WTC11 (cell line): ENCODE measurements at regions of chr16 and their contacts with region 1.

Region 1: DNA sequence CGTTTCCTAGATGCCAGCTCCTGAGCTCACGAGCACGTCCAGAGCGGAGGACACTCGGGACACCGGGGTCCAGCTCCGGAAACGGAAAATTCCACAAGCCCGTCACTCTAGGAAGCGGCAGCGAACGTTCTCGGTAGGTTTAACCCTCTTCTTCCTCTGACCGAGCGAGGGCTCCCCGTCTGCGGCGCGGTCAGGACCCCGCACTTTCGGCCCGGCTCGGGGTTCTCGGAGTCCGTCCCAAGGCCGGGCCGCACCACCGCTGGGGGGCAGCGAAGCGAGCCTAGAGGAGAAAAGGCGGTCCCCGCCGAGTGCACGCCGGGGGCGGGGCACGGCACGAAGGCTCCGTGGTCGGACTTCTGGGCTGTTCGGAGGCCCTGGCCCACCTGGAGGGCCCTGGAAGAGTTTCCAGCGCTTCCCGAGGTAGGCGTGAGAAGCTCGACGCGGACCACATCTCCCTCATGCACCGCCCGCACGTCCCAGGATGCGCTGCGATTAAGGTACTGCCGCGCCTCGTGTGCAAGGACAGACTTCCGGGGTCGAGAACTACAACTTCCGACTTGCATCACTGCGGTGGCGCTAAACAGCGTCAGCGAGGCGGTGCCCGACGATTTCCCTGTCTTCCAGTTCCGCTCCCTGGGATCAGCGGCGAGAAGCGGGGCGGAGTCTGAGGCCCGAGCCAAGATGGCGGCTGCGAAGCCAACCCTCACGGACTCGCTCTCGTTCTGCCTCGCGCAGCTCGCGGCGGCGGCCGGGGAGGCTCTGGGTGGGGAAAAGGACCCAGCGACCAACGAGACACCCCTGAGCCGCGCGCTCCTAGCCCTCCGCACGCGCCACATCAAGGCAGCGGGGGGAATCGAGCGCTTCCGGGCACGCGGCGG is at the start of gene ARMC5:
- DNase-seq: peak; percentile 97
- ATAC-seq: peak; percentile 77
- H3K4me3 Mint-ChIP-seq: peak within 1 kb of the TSS; percentile 88
- H3K27ac Mint-ChIP-seq: peak within 1 kb of the TSS; percentile 93
- H3K4me1 Mint-ChIP-seq: peaks cover 29% of the 10 kb centered on the region
- H3K27me3 Mint-ChIP-seq: no peaks in the 10 kb centered on the region
- CTCF ChIP-seq: no peak
- total RNA-seq, gene ARMC5: 11.3 to 13.2 TPM (median 13.0 TPM) in 3 replicates

Region 2: DNA sequence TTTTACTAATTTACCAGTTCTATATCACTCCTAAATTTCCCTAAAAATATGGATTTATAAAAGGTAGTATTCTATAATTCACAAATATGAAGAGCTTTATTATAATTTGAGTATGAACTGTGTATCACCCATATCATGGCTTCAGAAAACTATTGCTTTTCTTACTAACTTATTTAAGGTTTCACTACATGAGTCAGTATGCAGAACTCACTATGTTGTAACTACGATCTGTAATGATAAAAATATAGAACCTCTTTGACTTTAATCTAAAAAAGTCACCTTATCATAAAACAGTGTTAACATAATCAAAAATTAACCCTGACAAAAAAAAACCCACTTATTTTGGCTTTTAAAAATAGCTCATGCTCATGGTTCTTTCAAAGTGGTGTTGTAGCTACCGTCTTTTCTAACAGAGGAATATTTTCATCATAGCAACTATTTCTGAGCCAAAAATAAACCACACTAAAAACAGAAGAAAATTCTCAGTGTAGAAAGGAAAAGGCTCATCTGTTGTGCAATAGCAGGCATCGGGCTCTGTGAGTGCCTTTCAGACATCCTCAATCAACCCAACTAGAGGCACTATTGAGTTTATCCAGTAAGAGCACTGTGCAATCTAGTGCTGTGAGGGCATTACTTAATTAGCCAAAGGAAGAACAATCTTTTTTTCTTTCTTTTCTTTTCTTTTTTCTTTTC is 157.2 kb before region 1 on chr16:
- CTCF ChIA-PET with region 1: no interaction called
- POLR2A ChIA-PET with region 1: no interaction called
- DNase-seq: no peak
- ATAC-seq: peak; percentile 24; the same call in 1 of the 2 replicates
- H3K4me3 Mint-ChIP-seq: no peak overlapping the region
- H3K27ac Mint-ChIP-seq: no peak overlapping the region
- H3K4me1 Mint-ChIP-seq: no peaks in the 10 kb centered on the region
- H3K27me3 Mint-ChIP-seq: peaks cover 7% of the 10 kb centered on the region; the same call in 1 of the 2 replicates
- CTCF ChIP-seq: no peak

Region 3: DNA sequence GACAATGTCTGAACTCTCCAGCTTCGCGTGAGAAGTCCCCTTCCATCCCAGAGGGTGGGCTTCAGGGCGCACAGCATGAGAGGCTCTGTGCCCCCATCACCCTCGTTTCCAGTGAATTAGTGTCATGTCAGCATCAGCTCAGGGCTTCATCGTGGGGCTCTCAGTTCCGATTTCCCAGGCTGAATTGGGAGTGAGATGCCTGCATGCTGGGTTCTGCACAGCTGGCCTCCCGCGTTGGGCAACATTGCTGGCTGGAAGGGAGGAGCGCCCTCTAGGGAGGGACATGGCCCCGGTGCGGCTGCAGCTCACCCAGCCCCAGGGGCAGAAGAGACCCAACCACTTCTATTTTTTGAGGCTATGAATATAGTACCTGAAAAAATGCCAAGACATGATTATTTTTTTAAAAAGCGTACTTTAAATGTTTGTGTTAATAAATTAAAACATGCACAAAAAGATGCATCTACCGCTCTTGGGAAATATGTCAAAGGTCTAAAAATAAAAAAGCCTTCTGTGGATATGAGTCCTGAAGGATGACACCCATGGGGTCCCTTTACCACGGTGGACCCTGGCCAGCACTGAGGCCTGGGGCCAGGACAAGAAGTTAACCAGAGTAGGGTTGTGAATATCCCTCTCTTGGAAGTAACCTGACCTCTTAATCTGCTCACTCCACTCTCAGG is 76.5 kb before region 1 on chr16:
- CTCF ChIA-PET with region 1: interaction called, 13 read pairs
- POLR2A ChIA-PET with region 1: no interaction called
- DNase-seq: peak; percentile 83
- ATAC-seq: peak; percentile 94
- H3K4me3 Mint-ChIP-seq: peak overlapping the region; percentile 31
- H3K27ac Mint-ChIP-seq: peak overlapping the region; percentile 44
- H3K4me1 Mint-ChIP-seq: peaks cover 8% of the 10 kb centered on the region
- H3K27me3 Mint-ChIP-seq: peaks cover 4% of the 10 kb centered on the region; the same call in 1 of the 2 replicates
- CTCF ChIP-seq: peak; percentile 62

Region 4: GRCh38 chr16:31472709-31473203 is 13.7 kb after region 1 on chr16:
- CTCF ChIA-PET with region 1: interaction called, 221 read pairs
- POLR2A ChIA-PET with region 1: interaction called, 10 read pairs
- DNase-seq: peak; percentile 93
- ATAC-seq: peak; percentile 58
- H3K4me3 Mint-ChIP-seq: peak overlapping the region; percentile 82
- H3K27ac Mint-ChIP-seq: no peak overlapping the region
- H3K4me1 Mint-ChIP-seq: peaks cover 11% of the 10 kb centered on the region
- H3K27me3 Mint-ChIP-seq: peaks cover 65% of the 10 kb centered on the region
- CTCF ChIP-seq: peak; percentile 90

Region 5: DNA sequence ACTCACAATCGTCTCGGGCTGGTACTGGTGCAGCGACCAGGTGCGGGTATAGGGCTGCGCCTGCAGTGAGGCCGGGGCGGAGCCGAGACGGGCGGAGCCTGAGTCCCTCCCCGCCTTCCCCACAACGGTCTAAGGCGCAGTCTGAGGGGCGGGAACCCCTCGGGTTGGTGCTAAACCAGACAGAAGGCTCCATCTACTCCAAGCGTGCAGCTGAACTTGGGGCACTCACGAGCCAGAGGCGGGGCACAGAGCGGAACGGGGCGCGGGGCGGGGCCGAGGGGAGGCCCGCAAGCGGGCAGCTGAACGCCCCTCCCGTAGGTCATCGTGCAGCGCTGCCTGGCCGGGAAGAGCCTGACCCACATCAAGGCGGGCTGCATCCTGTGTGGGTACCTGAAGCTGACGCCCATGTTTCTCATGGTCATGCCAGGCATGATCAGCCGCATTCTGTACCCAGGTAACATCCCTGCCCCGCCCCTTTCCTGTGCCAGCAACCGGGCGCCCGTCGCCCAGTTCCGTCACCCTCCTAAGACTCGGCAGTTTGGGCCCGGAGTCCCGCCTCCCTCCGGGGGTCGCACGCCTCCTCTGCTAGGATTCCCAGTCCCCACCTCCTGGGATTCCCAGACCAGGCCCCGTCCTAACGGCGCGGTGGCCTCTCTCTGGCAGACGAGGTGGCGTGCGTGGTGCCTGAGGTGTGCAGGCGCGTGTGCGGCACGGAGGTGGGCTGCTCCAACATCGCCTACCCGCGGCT is 28.8 kb after region 1 on chr16:
- CTCF ChIA-PET with region 1: interaction called, 221 read pairs
- POLR2A ChIA-PET with region 1: no interaction called
- DNase-seq: peak; percentile 78
- ATAC-seq: peak; percentile 89
- H3K4me3 Mint-ChIP-seq: peak overlapping the region; percentile 78
- H3K27ac Mint-ChIP-seq: no peak overlapping the region
- H3K4me1 Mint-ChIP-seq: peaks cover 8% of the 10 kb centered on the region
- H3K27me3 Mint-ChIP-seq: peaks cover 73% of the 10 kb centered on the region
- CTCF ChIP-seq: no peak

Region 6: DNA sequence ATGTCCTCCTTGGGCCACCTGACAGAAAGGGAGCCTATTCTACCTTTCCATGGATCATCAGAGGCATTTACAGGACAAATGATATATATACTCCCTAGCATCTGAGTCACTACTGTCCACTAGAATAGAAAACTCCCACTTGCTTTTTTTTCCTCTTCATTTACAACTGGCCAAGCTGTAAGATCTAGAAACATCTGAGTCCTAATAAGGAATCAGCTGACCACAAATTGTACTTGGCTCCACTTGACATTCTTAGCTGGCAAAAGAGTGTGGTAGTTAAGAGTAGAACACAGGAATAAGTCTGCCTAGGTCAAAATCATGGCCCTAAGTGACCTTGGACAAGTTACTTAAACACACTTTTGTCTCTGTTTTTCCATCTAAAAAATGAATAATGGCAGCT is 43.9 kb after region 1 on chr16:
- CTCF ChIA-PET with region 1: interaction called, 10 read pairs
- POLR2A ChIA-PET with region 1: no interaction called
- DNase-seq: no peak
- ATAC-seq: no peak
- H3K4me3 Mint-ChIP-seq: no peak overlapping the region
- H3K27ac Mint-ChIP-seq: peak overlapping the region; percentile 41; the same call in 1 of the 2 replicates
- H3K4me1 Mint-ChIP-seq: peaks cover 29% of the 10 kb centered on the region
- H3K27me3 Mint-ChIP-seq: no peaks in the 10 kb centered on the region
- CTCF ChIP-seq: no peak

Region 7: GRCh38 chr16:31528523-31529397 is 69.7 kb after region 1 on chr16:
- CTCF ChIA-PET with region 1: interaction called, 16 read pairs
- POLR2A ChIA-PET with region 1: no interaction called
- DNase-seq: peak; percentile 34
- ATAC-seq: peak; percentile 52
- H3K4me3 Mint-ChIP-seq: peak overlapping the region; percentile 81
- H3K27ac Mint-ChIP-seq: no peak overlapping the region
- H3K4me1 Mint-ChIP-seq: peaks cover 30% of the 10 kb centered on the region
- H3K27me3 Mint-ChIP-seq: peaks cover 13% of the 10 kb centered on the region
- CTCF ChIP-seq: no peak

Region 8: DNA sequence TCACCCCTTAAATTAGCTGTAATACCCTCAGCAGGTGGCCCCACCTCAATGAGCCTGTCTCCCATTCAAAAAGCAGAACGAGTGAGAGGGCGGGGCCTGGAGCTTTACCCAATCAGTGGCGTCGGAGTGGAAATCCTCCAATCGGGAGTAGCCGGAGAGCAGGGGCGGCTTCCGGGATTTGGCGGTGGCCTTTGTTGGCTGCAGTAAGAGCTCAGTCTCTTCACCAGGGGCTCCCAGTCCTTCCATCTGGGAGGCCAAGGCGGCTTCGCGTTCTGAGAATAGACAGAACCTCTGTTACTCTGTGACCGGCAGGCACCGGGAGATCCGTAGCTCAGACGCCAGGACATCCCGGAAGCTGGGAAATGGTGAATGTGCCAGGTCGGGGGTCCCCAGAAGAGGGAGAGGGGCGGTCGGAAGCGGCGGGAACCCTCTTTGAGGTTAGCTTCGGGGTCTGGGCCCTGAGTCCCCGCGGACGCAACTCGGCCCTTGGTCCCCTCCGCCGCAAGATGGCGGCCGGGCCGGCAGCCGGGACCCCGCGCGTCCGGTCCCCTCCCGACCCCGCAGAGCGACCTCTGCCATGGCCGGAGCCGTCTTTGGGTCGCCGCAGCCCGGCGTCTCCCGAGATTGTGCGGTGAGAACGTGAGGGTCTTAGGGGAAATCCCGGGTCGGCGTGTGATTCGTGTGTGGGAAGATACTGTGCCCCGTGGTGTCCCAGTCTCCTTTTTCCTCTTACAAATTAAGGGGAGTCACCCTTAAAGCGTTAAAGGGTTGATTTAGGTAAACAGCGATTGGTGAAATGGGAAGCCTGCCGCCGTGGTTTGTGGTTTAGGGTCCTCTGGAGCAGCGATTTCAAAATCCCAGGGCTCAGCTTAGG is 254.2 kb after region 1 on chr16:
- CTCF ChIA-PET with region 1: interaction called, 38 read pairs
- POLR2A ChIA-PET with region 1: interaction called, 13 read pairs
- DNase-seq: peak; percentile 95
- ATAC-seq: peak; percentile 93
- H3K4me3 Mint-ChIP-seq: peak overlapping the region; percentile 98
- H3K27ac Mint-ChIP-seq: peak overlapping the region; percentile 99
- H3K4me1 Mint-ChIP-seq: peaks cover 32% of the 10 kb centered on the region
- H3K27me3 Mint-ChIP-seq: no peaks in the 10 kb centered on the region
- CTCF ChIP-seq: no peak